PC-9 (cell line): ENCODE measurements at regions of chr6 and their contacts with region 1.

Region 1: GRCh38 chr6:18465410-18466154 is 78.4 kb downstream of the RNF144B start:
- DNase-seq: no peak
- H3K4me3 ChIP-seq: no peak overlapping the region
- H3K27ac ChIP-seq: no peak overlapping the region
- H3K4me1 ChIP-seq: no peaks in the 10 kb centered on the region
- H3K27me3 ChIP-seq: no peaks in the 10 kb centered on the region
- CTCF ChIP-seq: no peak

Region 2: DNA sequence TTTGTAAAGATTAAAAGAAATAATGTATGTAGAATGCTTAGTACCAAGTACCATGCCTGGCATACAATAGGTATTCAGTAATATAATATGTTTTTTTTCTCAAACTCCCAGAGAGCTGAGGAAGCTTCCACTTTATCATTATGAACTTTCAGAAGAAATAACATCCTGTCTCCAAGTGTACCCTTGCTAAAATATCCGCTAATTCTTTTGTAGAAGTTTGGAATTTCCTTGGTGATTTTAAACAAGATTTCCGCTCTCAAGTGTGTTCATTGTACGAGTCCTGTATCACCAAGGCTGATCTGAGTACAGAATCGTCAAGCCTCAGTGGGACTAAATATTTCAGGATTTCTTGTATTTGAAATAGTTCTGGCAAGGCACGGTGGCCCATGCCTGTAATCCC is 94.6 kb before region 1 on chr6:
- CTCF ChIA-PET with region 1: no interaction called
- POLR2A ChIA-PET with region 1: interaction called, 19 read pairs
- intact Hi-C with region 1: no loop called
- DNase-seq: no peak
- H3K4me3 ChIP-seq: no peak overlapping the region
- H3K27ac ChIP-seq: no peak overlapping the region
- H3K4me1 ChIP-seq: peaks cover 4% of the 10 kb centered on the region; the same call in 1 of the 2 replicates
- H3K27me3 ChIP-seq: no peaks in the 10 kb centered on the region
- CTCF ChIP-seq: no peak